Activated T-helper 2 cell treated with anti-CD3 and anti-CD28 coated beads, Interferon-gamma antibody, Interleukin-2, Interleukin-4, amounts not matched to agents 10 μg/mL and 5 μg/mL and 100 μg/mL, durations not matched to agents 14 hours and 24 hours and 36 hours (primary cell): ENCODE measurements at regions of chr2 and their contacts with region 1.

Region 1: DNA sequence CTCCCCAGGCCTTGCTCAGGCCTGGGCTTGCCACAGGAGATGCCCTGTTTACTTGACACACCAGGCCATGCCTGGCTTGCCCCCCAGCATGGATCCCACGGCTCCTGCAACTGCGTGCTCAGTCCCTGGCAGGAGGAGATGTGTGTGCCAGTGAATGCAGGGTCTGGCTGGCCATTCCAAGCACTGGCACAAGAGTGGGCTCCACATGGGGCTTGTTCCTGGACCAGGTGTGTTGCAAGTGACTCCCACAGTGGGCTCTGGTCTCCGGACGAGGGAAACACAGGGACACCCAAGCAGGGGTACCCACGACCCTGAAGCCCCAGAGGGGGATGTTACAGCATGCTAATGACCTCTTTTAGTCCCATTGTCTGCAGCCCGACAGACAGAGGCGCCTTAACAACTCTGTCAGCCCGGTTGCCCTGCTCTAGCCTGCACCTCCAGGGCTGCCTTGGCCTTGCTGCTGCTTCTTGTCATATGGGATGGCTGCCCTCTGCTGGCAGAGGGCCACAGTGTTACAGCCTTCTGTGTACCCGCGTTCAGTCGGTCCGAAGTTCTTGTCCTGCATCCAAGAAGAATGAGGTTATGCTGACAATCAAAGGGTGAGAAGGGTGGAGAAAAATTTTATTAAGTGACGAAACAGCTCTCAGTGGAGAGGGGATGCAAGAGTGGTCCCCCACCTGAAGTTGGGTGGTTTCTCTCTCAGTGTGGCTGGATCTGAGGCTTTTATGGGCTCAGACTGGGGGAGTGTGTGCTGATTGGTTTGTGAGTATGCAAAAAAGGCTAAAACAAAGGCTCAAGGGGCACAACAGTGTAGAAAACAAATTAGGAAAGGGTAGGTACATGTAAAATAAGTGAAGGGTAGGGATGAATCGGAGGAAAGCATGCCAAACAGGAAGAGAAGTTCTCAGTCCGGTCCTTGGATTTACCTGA is 180.4 kb downstream of the MBD5 start:
- DNase-seq: peak; percentile 22
- H3K4me3 Mint-ChIP-seq: no peak overlapping the region
- H3K27ac Mint-ChIP-seq: no peak overlapping the region
- H3K4me1 Mint-ChIP-seq: no peaks in the 10 kb centered on the region
- H3K27me3 Mint-ChIP-seq: no peaks in the 10 kb centered on the region

Region 2: GRCh38 chr2:147937744-147938349 is 263.5 kb before region 1 on chr2:
- intact Hi-C with region 1: loop called (anchors 1 kb)
- DNase-seq: no peak
- H3K4me3 Mint-ChIP-seq: no peak overlapping the region
- H3K27ac Mint-ChIP-seq: no peak overlapping the region
- H3K4me1 Mint-ChIP-seq: no peaks in the 10 kb centered on the region
- H3K27me3 Mint-ChIP-seq: no peaks in the 10 kb centered on the region

Region 3: GRCh38 chr2:147989809-147990403 is 211.4 kb before region 1 on chr2:
- intact Hi-C with region 1: loop called (anchors 1 kb)
- DNase-seq: no peak
- H3K4me3 Mint-ChIP-seq: no peak overlapping the region
- H3K27ac Mint-ChIP-seq: no peak overlapping the region
- H3K4me1 Mint-ChIP-seq: peaks cover 8% of the 10 kb centered on the region
- H3K27me3 Mint-ChIP-seq: no peaks in the 10 kb centered on the region